ENCODE measurements at regions of chr17 and their contacts with region 1.

Region 1: GRCh38 chr17:979538-980405 is at the start of gene NXN:
- DNase-seq: peak; percentile 58
- H3K4me3 Mint-ChIP-seq: peak within 1 kb of the TSS; percentile 76
- H3K27ac Mint-ChIP-seq: no peak within 1 kb of the TSS
- H3K4me1 Mint-ChIP-seq: peaks cover 5% of the 10 kb centered on the region
- H3K27me3 Mint-ChIP-seq: no peaks in the 10 kb centered on the region
- CTCF ChIP-seq: peak; percentile 20
- total RNA-seq, gene NXN: 36.8 and 57.3 TPM in 2 replicates

Region 2: DNA sequence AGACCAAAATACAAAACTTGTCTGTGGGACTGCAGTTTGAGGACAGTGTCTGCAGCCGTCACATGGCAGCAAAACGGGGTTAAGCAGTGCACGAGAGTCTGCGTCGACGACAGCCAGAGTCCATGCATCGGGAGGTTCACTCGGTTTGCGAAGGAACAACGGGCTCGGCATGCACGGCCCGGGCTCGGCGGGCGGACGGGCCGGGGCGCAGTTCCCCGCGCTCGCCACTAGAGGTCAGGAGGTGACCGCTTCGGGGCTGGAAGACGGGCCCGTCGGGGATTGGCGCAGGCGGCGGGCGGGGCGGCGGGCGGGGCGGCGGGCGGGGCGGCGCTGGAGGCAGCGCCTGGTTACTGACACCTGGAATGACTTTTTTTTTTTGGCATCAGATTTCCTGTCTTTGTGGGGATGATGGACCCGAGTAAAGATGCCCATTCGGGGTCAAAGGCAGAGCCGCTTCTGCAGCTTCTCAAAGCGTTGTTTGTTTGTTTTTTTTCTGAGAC is 835.9 kb before region 1 on chr17:
- CTCF ChIA-PET with region 1: no interaction called
- POLR2A ChIA-PET with region 1: no interaction called
- intact Hi-C with region 1: loop called (anchors 5 kb)
- DNase-seq: peak; percentile 68
- H3K4me3 Mint-ChIP-seq: no peak overlapping the region
- H3K27ac Mint-ChIP-seq: no peak overlapping the region
- H3K4me1 Mint-ChIP-seq: no peaks in the 10 kb centered on the region
- H3K27me3 Mint-ChIP-seq: peaks cover 11% of the 10 kb centered on the region
- CTCF ChIP-seq: peak; percentile 97

Region 3: GRCh38 chr17:693791-694638 is 285.8 kb before region 1 on chr17:
- CTCF ChIA-PET with region 1: no interaction called
- POLR2A ChIA-PET with region 1: interaction called, 3 read pairs
- intact Hi-C with region 1: loop called (anchors 5 kb)
- DNase-seq: peak; percentile 78
- H3K4me3 Mint-ChIP-seq: peak overlapping the region; percentile 55
- H3K27ac Mint-ChIP-seq: peak overlapping the region; percentile 75
- H3K4me1 Mint-ChIP-seq: peaks cover 30% of the 10 kb centered on the region
- H3K27me3 Mint-ChIP-seq: no peaks in the 10 kb centered on the region
- CTCF ChIP-seq: no peak

Region 4: GRCh38 chr17:794876-795275 is 184.9 kb before region 1 on chr17:
- CTCF ChIA-PET with region 1: interaction called, 53 read pairs
- POLR2A ChIA-PET with region 1: interaction called, 17 read pairs
- intact Hi-C with region 1: loop called (anchors 1 kb)
- DNase-seq: peak; percentile 58
- H3K4me3 Mint-ChIP-seq: no peak overlapping the region
- H3K27ac Mint-ChIP-seq: no peak overlapping the region
- H3K4me1 Mint-ChIP-seq: peaks cover 6% of the 10 kb centered on the region
- H3K27me3 Mint-ChIP-seq: no peaks in the 10 kb centered on the region
- CTCF ChIP-seq: peak; percentile 70

Region 5: GRCh38 chr17:879549-880442 is 100.0 kb before region 1 on chr17:
- CTCF ChIA-PET with region 1: interaction called, 25 read pairs
- POLR2A ChIA-PET with region 1: interaction called, 159 read pairs
- intact Hi-C with region 1: loop called (anchors 1 kb)
- DNase-seq: peak; percentile 98
- H3K4me3 Mint-ChIP-seq: peak overlapping the region; percentile 66
- H3K27ac Mint-ChIP-seq: peak overlapping the region; percentile 91
- H3K4me1 Mint-ChIP-seq: peaks cover 34% of the 10 kb centered on the region
- H3K27me3 Mint-ChIP-seq: no peaks in the 10 kb centered on the region
- CTCF ChIP-seq: peak; percentile 59

Region 6: GRCh38 chr17:915538-916201 is 64.1 kb before region 1 on chr17:
- CTCF ChIA-PET with region 1: interaction called, 3 read pairs
- POLR2A ChIA-PET with region 1: interaction called, 13 read pairs
- intact Hi-C with region 1: no loop called
- DNase-seq: peak; percentile 80
- H3K4me3 Mint-ChIP-seq: no peak overlapping the region
- H3K27ac Mint-ChIP-seq: peak overlapping the region; percentile 75
- H3K4me1 Mint-ChIP-seq: peaks cover 11% of the 10 kb centered on the region
- H3K27me3 Mint-ChIP-seq: no peaks in the 10 kb centered on the region
- CTCF ChIP-seq: no peak

Region 7: DNA sequence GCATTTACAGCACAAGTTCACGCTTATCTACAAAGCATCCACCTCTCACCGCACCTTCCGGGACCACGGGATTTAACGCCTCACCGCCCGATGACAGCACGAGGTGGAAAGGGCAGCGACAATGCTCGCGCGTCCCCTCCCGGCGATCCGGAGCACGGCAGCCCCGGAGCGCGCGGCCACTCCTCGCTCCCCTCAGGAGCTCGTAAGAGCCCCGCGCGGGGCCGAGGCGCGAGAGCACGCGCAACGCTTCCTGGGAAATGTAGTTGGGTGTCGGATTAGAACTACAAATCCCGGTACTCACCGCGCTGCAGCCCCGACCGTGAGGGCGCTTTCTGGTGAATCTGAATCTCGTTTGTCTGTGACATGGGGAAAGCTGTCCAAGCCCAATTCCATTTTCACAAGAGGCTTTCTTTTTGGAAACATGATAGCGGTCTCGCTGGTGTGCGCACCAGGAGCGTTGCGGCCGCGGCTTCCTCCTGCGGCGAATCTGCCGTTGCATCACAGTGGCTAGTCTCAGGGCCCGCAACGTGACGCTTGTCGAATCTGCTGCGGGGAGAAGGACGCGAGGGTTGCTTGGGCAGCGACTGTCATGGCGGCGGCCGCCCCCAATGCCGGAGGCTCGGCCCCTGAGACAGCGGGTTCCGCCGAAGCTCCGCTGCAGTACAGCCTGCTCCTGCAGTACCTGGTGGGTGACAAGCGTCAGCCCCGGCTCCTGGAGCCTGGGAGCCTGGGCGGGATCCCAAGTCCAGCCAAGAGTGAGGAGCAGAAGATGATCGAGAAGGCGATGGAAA is 17.0 kb after region 1 on chr17 and contains the start of gene TIMM22:
- CTCF ChIA-PET with region 1: interaction called, 35 read pairs
- POLR2A ChIA-PET with region 1: interaction called, 14 read pairs
- intact Hi-C with region 1: loop called (anchors 1 kb)
- DNase-seq: peak; percentile 98
- H3K4me3 Mint-ChIP-seq: peak within 1 kb of the TSS; percentile 95
- H3K27ac Mint-ChIP-seq: peak within 1 kb of the TSS; percentile 94
- H3K4me1 Mint-ChIP-seq: peaks cover 19% of the 10 kb centered on the region
- H3K27me3 Mint-ChIP-seq: no peaks in the 10 kb centered on the region
- CTCF ChIP-seq: peak; percentile 92
- total RNA-seq, gene TIMM22: 16.6 and 18.5 TPM in 2 replicates

Region 8: DNA sequence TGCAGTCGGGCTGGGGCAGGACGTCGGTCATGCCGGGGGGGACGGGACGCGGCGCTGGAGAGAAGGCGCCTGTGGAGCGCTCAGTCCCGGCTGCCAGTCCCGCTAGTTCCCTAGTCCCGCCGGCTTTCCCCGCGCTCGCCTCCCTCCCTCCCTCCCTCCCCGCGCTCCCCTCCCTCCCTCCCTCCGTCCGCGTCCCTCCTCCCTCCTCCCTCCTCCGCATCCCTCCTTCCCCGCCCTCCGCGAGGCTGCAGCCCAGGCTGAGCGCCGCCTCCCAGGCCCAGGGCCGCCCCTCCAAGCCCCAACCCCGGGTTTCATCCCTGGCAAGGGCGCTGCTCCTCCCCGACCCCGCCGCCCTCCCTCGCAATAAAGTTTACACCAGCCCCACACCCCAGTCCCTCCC is 51.9 kb after region 1 on chr17:
- CTCF ChIA-PET with region 1: no interaction called
- POLR2A ChIA-PET with region 1: no interaction called
- intact Hi-C with region 1: no loop called
- DNase-seq: no peak
- H3K4me3 Mint-ChIP-seq: no peak overlapping the region
- H3K27ac Mint-ChIP-seq: no peak overlapping the region
- H3K4me1 Mint-ChIP-seq: no peaks in the 10 kb centered on the region
- H3K27me3 Mint-ChIP-seq: no peaks in the 10 kb centered on the region
- CTCF ChIP-seq: no peak

Region 9: DNA sequence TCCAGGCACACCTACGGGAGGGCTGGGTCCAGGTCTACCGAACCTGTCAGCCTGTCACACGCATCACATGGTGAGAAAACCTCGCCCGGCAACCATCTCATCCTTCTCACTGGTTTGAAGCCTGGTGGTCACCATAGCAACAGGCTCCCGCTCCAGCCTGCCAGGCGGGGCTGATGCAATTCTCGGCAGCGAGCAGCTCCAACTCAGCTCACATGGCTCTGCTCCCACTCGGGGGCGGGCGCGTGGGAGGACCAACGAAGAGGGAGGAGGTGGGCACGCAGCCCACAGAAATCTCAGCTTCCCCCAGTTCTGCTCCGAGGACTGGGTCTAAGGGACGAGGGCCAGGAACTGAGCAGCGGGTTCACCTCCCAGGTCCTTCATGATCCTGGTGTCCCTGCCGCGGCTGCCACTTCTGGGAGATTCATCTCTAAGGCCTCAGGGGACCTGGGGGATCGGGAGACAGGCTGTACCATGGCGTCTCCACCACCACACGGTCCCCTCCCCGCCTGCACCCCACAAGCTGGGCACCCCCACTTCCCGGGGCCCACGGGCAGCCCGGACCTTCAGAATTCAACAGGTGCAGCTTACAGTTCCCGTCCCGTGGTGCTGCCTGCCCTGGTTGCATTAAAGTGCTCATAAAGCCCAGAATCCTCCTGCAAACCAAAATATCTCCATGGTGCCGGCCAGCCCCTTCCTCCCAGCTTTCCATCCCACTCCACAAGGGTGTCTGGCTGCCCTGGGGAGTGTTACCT is 174.2 kb after region 1 on chr17:
- CTCF ChIA-PET with region 1: no interaction called
- POLR2A ChIA-PET with region 1: no interaction called
- intact Hi-C with region 1: no loop called
- DNase-seq: peak; percentile 11
- H3K4me3 Mint-ChIP-seq: no peak overlapping the region
- H3K27ac Mint-ChIP-seq: no peak overlapping the region
- H3K4me1 Mint-ChIP-seq: no peaks in the 10 kb centered on the region
- H3K27me3 Mint-ChIP-seq: no peaks in the 10 kb centered on the region
- CTCF ChIP-seq: no peak

Region 10: GRCh38 chr17:1267471-1267947 is 287.7 kb after region 1 on chr17:
- CTCF ChIA-PET with region 1: no interaction called
- POLR2A ChIA-PET with region 1: no interaction called
- intact Hi-C with region 1: no loop called
- DNase-seq: no peak
- H3K4me3 Mint-ChIP-seq: peak overlapping the region; percentile 87
- H3K27ac Mint-ChIP-seq: peak overlapping the region; percentile 57
- H3K4me1 Mint-ChIP-seq: peaks cover 8% of the 10 kb centered on the region
- H3K27me3 Mint-ChIP-seq: no peaks in the 10 kb centered on the region
- CTCF ChIP-seq: no peak